Spleen (tissue), 13 donors: ENCODE measurements at regions of chr1 and their contacts with region 1.

Region 1: DNA sequence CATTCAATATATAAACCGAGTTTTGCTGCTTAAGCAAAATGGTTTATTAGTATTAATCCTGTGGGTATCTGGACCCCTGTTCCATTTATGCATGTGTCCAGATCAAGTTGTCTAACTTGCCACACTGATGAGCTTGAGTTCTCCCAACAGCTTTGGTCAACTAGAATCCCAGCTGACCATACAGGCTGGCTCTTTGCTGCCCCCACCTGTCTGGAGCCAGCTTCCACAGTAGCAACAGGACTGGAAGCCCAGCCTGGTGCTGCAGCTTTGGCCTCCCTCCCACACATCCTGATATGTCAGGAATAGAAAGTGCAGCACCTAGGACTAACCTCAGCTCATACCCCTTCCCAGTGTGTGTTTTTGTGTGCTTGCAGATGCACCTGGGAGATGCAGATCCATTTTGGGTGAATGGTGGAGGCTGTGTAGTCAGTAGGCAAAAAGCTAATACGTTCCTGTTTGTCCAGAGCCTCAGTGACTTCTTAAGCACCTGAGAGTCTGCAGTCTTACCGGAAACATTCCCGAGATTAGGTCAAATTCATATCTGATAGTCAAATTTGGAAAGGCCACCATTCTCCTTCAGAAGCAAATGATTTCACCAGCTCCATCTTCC is 40.9 kb upstream of the BEND5 start:
- DNase-seq: peak; percentile 84
- H3K4me3 ChIP-seq: no peak overlapping the region
- H3K27ac ChIP-seq: no peak overlapping the region
- H3K4me1 ChIP-seq: peaks cover 0 to 9% (median 0%) of the 10 kb centered on the region in 6 donors
- H3K27me3 ChIP-seq: no peaks in the 10 kb centered on the region
- CTCF ChIP-seq: peak in 10 of 11 experiments; percentile 43 to 82 (median 75)
- POLR2A ChIP-seq: no peak

Region 2: GRCh38 chr1:48746906-48747305 is 70.7 kb before region 1 on chr1:
- intact Hi-C with region 1: loop called (anchors 5 kb)
- DNase-seq: no peak
- H3K4me3 ChIP-seq: no peak overlapping the region
- H3K27ac ChIP-seq: no peak overlapping the region
- H3K4me1 ChIP-seq: peaks cover 0 to 36% (median 21%) of the 10 kb centered on the region in 6 donors
- H3K27me3 ChIP-seq: no peaks in the 10 kb centered on the region
- CTCF ChIP-seq: no peak
- POLR2A ChIP-seq: no peak